Mucosa of descending colon (tissue), 3 donors: ENCODE measurements at regions of chr11 and their contacts with region 1.

Region 1: GRCh38 chr11:4496557-4497275 is 14.3 kb downstream of the OR52K1 start:
- DNase-seq: no peak
- ATAC-seq: no peak
- H3K4me3 ChIP-seq: no peak overlapping the region
- H3K4me1 ChIP-seq: no peaks in the 10 kb centered on the region
- CTCF ChIP-seq: no peak

Region 2: GRCh38 chr11:4181782-4182721 is 314.7 kb before region 1 on chr11:
- intact Hi-C with region 1: loop called (anchors 5 kb)
- DNase-seq: peak in 2 of 3 donors; percentile 75 to 78
- ATAC-seq: peak; percentile 88
- H3K4me3 ChIP-seq: no peak overlapping the region
- H3K4me1 ChIP-seq: no peaks in the 10 kb centered on the region
- CTCF ChIP-seq: peak; percentile 63

Region 3: DNA sequence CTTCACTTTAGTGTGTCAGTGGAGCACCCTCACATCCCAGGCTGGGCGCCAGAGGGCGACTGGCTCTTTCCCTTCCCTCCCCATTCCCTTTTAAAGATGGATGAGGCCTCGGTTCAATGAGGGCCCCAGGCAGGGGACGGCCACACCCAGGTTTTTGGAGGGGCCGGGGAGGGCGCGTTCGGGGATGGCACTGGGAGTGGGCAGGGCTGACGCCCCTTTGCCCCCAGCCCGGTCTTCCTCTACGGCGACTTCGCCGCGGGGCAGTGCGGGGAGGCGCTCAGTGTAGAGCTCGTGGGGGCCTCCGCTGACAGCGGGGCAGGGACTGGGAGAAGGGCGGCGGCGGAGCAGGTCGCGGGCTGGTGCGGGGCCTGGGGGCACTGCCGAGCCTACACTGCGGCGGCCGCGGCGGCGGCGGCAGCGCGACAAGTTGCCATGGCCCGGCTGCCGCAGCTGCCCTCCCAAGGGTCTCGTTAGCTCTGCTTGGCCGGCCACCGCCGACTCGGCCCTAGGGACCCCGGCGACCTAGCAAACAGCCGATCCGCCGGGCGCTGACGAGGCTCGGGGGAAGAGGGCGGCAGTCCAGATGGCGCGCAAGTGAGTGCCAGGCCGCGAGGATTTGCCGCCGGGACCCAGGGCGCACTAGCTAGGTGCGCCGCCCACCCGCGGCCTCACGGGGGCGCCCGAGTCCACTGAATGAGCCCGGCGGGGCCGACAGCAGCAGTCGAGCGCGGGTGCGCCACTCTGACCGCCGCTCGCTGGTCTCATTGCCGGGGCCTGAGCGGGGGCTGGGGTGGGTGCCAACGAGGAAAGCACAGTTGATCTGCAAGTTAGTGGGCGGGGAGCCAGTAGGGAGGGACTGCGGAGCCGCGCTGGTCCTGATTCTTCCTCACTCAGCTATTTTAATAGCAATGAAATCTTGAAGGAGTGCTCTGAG is 309.4 kb before region 1 on chr11:
- intact Hi-C with region 1: loop called (anchors 5 kb)
- DNase-seq: peak; percentile 86 to 94 (median 92)
- ATAC-seq: peak; percentile 97
- H3K4me3 ChIP-seq: no peak overlapping the region
- H3K4me1 ChIP-seq: no peaks in the 10 kb centered on the region
- CTCF ChIP-seq: peak; percentile 96